ENCODE measurements at regions of chr9 and their contacts with region 1.

Region 1: GRCh38 chr9:120868676-120869359 is 8.2 kb downstream of the PHF19 start:
- DNase-seq: peak; percentile 92 to 97 (median 95)
- ATAC-seq: peak; percentile 91
- H3K4me3 ChIP-seq: peak overlapping the region; percentile 78
- H3K4me3 Mint-ChIP-seq: peak overlapping the region; percentile 49 to 95 (median 91)
- H3K27ac ChIP-seq: peak overlapping the region; percentile 77
- H3K27ac Mint-ChIP-seq: peak overlapping the region; percentile 79 to 97 (median 94)
- H3K4me1 ChIP-seq: peaks cover 7 to 10% of the 10 kb centered on the region in 2 donors
- H3K4me1 Mint-ChIP-seq: peaks cover 13 to 49% (median 24%) of the 10 kb centered on the region in 7 donors
- H3K27me3 ChIP-seq: no peaks in the 10 kb centered on the region
- H3K27me3 Mint-ChIP-seq: no peaks in the 10 kb centered on the region

Region 2: DNA sequence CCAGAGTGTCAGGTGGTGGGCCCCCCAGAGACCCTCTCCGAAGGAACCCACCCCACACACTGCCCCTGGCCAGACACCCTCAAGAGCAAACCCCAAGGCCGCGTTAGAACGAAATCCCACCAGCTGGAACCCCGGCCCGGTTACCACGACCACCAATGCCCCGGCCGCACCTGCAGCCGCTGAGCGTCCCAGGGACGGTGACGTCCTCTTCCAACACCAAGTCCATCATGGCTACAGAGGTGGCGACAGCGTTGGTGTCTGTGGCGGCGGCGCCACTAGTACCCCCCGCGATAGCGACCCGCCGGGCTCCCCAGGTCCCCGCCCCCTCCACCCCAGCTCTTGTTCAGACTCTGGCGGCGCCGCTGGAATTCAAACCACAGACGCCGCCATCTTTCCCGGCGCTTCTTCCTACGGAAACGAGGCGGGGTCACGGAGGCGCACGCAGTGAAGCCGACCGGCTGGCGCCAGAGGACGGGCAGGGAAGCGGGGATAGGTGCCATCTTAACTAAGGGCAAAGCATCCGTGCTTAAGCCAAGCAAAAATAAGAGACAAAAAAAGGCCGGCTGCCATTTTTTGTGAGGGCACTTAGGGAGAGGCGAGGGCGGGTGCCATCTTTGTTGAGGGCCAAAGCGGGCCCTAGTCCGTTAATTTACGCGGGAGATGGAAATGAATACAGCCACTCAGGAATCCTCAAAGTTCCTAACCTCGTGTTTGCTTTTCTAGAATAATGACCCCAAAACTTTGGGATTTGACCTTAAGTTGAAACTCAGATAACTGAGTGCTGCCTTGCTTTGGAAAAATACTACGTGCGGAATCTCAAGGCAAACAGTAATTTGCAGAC is 288.8 kb before region 1 on chr9 and contains the start of gene CDK5RAP2:
- CTCF ChIA-PET with region 1: no interaction called
- POLR2A ChIA-PET with region 1: no interaction called
- intact Hi-C with region 1: loop called in 1 of 2 experiments (anchors 1 kb)
- DNase-seq: peak; percentile 77 to 94 (median 92)
- ATAC-seq: peak; percentile 99
- H3K4me3 ChIP-seq: peak within 1 kb of the TSS; percentile 85
- H3K4me3 Mint-ChIP-seq: peak within 1 kb of the TSS; percentile 86 to 98 (median 94)
- H3K27ac ChIP-seq: peak within 1 kb of the TSS; percentile 81
- H3K27ac Mint-ChIP-seq: peak within 1 kb of the TSS; percentile 88 to 95 (median 91)
- H3K4me1 ChIP-seq: peaks cover 15 to 17% of the 10 kb centered on the region in 2 donors
- H3K4me1 Mint-ChIP-seq: peaks cover 29 to 68% (median 62%) of the 10 kb centered on the region in 7 donors
- H3K27me3 ChIP-seq: no peaks in the 10 kb centered on the region
- H3K27me3 Mint-ChIP-seq: peaks cover 0 to 3% (median 0%) of the 10 kb centered on the region in 5 donors
- total RNA-seq, gene CDK5RAP2: 62.2 to 98.1 (median 78.1) TPM

Region 3: DNA sequence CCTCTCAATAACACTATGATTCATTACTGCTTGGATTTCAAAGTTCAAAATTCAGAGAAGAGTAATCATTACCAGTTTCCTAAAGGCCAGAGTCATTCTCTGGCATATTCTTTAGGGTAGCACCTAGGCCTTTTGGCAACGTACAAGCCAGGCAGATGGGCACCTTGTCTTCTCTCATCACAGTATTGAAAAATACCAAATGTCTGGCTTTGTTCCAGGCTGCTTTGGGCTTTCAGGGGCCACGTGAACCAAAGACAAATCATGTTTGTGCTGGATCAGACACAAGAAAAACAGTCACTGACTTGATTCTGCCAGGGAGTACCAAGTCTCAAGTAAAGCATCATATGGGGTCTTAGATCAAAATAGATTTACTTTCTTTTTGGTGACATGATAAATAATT is 170.1 kb before region 1 on chr9:
- CTCF ChIA-PET with region 1: no interaction called
- POLR2A ChIA-PET with region 1: no interaction called
- intact Hi-C with region 1: no loop called
- DNase-seq: no peak
- ATAC-seq: no peak
- H3K4me3 ChIP-seq: no peak overlapping the region
- H3K4me3 Mint-ChIP-seq: no peak overlapping the region
- H3K27ac ChIP-seq: no peak overlapping the region
- H3K27ac Mint-ChIP-seq: no peak overlapping the region
- H3K4me1 ChIP-seq: no peaks in the 10 kb centered on the region
- H3K4me1 Mint-ChIP-seq: peaks cover 11 to 26% (median 20%) of the 10 kb centered on the region in 7 donors
- H3K27me3 ChIP-seq: no peaks in the 10 kb centered on the region
- H3K27me3 Mint-ChIP-seq: no peaks in the 10 kb centered on the region

Region 4: DNA sequence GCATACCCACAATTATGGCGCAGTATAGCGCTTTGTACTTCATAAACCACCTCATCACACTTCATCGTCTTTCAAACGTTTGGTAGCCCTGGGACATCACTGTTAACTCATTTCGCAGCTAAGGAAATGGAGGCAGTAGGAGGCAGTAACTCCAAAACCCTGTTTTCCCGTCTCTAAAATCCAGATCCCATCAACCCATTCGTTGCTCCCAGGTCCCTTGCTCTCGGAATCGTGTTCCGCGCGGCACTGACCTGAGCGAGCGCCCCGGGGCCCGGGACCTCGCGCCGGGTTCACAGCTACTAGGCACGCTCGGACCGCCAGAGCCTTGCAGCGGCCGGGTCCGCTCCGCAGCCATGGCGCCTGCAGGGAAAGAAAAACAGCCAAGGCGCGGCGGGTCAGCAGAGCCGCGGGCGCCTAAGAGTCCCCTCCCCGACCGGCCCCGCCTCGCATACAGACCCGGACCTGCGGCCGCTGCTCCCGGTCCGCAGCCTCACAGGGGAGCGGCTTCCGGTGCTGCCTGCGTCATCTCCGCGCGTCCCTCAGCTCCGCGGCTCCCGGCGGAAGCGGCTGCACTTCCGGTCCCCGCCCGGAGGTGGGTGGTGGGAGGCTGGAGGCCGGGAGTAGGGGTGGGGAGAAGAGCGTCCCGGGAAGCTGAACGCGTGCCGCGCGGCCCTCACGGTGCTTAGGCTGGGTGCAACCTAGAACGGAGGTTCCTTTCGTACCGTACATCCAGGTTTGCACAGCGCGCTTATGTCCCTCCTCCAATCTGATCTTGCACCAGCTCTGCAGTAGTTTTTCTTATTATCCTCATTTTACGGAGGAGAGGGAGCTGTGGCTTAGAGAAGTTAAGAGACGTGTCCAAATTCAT is 75.7 kb before region 1 on chr9 and contains the start of gene FBXW2:
- CTCF ChIA-PET with region 1: interaction called, 3 read pairs
- POLR2A ChIA-PET with region 1: interaction called, 14 read pairs
- intact Hi-C with region 1: loop called (anchors 1 kb)
- DNase-seq: peak; percentile 65 to 96 (median 78)
- ATAC-seq: peak; percentile 91
- H3K4me3 ChIP-seq: peak within 1 kb of the TSS; percentile 66
- H3K4me3 Mint-ChIP-seq: peak within 1 kb of the TSS; percentile 91 to 98 (median 96)
- H3K27ac ChIP-seq: peak within 1 kb of the TSS; percentile 92
- H3K27ac Mint-ChIP-seq: peak within 1 kb of the TSS; percentile 88 to 98 (median 95)
- H3K4me1 ChIP-seq: peaks cover 28 to 34% of the 10 kb centered on the region in 2 donors
- H3K4me1 Mint-ChIP-seq: peaks cover 34 to 65% (median 58%) of the 10 kb centered on the region in 7 donors
- H3K27me3 ChIP-seq: no peaks in the 10 kb centered on the region
- H3K27me3 Mint-ChIP-seq: no peaks in the 10 kb centered on the region
- total RNA-seq, gene FBXW2: 72.5 to 90.3 (median 77.9) TPM

Region 5: GRCh38 chr9:120928483-120929228 is 59.8 kb after region 1 on chr9:
- CTCF ChIA-PET with region 1: interaction called, 10 read pairs
- POLR2A ChIA-PET with region 1: interaction called, 243 read pairs
- intact Hi-C with region 1: loop called (anchors 1 kb)
- DNase-seq: peak; percentile 63 to 86 (median 74)
- ATAC-seq: peak; percentile 58
- H3K4me3 ChIP-seq: peak overlapping the region; percentile 79
- H3K4me3 Mint-ChIP-seq: peak overlapping the region; percentile 90 to 100 (median 96)
- H3K27ac ChIP-seq: peak overlapping the region; percentile 97
- H3K27ac Mint-ChIP-seq: peak overlapping the region; percentile 95 to 100 (median 99)
- H3K4me1 ChIP-seq: peaks cover 62 to 84% of the 10 kb centered on the region in 2 donors
- H3K4me1 Mint-ChIP-seq: peaks cover 57 to 95% (median 86%) of the 10 kb centered on the region in 7 donors
- H3K27me3 ChIP-seq: no peaks in the 10 kb centered on the region
- H3K27me3 Mint-ChIP-seq: no peaks in the 10 kb centered on the region

Region 6: DNA sequence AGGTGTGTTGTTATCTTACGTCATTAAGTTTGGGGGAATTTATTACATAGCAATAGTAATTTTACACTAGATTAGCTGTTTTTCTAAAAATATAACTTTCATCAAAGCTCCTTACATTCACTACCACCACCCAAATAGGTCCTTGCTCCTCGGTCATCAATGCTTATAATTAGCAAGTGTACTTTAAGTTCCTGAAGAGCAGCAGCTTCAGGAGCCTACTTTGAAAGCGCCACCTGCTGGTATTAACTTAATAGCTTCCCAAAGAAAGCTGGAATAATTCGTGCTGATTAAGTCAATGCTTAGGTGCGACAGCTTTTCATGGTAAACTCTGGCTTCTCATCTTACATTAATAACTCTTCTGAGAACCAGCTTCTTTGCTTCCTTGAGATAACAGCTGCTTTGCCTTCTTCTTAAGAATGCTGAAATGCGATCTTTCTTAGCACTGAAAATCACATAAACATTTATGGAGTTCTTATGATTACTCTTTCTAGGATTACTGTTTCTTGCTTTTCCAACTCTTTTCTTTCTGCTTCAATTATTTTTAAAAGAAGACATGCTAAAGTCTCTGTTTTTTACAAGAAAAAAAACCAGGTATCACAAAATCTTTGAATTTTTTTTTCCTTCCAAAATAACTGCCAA is 191.3 kb after region 1 on chr9:
- CTCF ChIA-PET with region 1: interaction called, 3 read pairs
- POLR2A ChIA-PET with region 1: no interaction called
- intact Hi-C with region 1: loop called in 1 of 2 experiments (anchors 1 kb)
- DNase-seq: peak in 7 of 9 donors; percentile 16 to 59 (median 53)
- ATAC-seq: peak; percentile 67
- H3K4me3 ChIP-seq: no peak overlapping the region
- H3K4me3 Mint-ChIP-seq: no peak overlapping the region
- H3K27ac ChIP-seq: no peak overlapping the region
- H3K27ac Mint-ChIP-seq: no peak overlapping the region
- H3K4me1 ChIP-seq: peaks cover 0 to 5% of the 10 kb centered on the region in 2 donors
- H3K4me1 Mint-ChIP-seq: peaks cover 10 to 27% (median 15%) of the 10 kb centered on the region in 7 donors
- H3K27me3 ChIP-seq: no peaks in the 10 kb centered on the region
- H3K27me3 Mint-ChIP-seq: peaks cover 0 to 5% (median 0%) of the 10 kb centered on the region in 5 donors

Region 7: DNA sequence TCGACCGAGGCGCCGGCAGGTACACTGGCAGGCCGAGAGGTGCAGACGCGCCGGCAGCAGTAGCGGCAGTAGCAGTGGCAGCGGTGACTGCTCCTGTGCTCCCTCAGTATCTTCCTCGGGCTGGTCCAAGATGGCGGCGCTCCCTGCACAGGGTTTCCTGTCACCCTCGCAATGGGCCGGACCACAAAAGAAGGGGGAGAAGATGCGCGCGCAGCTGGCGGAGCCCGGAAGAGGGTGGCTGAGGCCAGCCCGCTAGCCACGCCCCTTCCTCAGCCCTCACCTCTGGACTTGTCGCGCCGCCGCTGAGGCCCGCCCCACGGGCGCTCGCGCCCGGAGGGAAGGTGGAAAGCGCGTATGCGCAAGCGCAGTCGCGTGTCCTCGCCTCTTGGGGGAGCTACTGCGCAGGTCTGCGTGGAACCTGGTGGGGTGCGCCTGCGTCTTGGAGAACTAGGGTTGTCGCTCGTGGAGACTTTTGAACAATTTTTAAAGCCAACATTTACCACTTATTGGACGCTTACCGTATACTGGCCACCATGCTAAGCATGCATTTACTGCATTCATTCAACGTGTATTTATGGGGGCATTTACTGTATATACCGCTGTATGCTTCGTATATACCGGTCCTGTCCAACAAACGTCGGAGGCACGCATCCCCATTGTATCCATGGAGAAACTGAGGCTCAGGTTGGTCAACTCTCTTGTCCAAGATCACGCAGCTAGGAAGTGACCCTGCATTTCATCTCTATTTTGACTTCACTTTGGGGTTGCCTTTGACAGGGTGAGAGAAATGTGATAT is 333.1 kb after region 1 on chr9 and contains the start of gene RAB14:
- CTCF ChIA-PET with region 1: no interaction called
- POLR2A ChIA-PET with region 1: no interaction called
- intact Hi-C with region 1: loop called (anchors 1 to 2 kb)
- DNase-seq: peak; percentile 99 to 100 (median 100)
- ATAC-seq: peak; percentile 95
- H3K4me3 ChIP-seq: peak within 1 kb of the TSS; percentile 71
- H3K4me3 Mint-ChIP-seq: peak within 1 kb of the TSS; percentile 79 to 100 (median 94)
- H3K27ac ChIP-seq: peak within 1 kb of the TSS; percentile 92
- H3K27ac Mint-ChIP-seq: peak within 1 kb of the TSS; percentile 88 to 98 (median 95)
- H3K4me1 ChIP-seq: peaks cover 24 to 34% of the 10 kb centered on the region in 2 donors
- H3K4me1 Mint-ChIP-seq: peaks cover 33 to 62% (median 50%) of the 10 kb centered on the region in 7 donors
- H3K27me3 ChIP-seq: no peaks in the 10 kb centered on the region
- H3K27me3 Mint-ChIP-seq: peaks cover 0 to 3% (median 0%) of the 10 kb centered on the region in 5 donors
- total RNA-seq, gene RAB14: 43.9 to 66.5 (median 60.7) TPM

Measured in naive thymus-derived CD4-positive, alpha-beta T cell (primary cell).